Activated CD4-positive, alpha-beta memory T cell treated with anti-CD3 and anti-CD28 coated beads for 36 hours (primary cell): ENCODE measurements at regions of chr5 and their contacts with region 1.

Region 1: DNA sequence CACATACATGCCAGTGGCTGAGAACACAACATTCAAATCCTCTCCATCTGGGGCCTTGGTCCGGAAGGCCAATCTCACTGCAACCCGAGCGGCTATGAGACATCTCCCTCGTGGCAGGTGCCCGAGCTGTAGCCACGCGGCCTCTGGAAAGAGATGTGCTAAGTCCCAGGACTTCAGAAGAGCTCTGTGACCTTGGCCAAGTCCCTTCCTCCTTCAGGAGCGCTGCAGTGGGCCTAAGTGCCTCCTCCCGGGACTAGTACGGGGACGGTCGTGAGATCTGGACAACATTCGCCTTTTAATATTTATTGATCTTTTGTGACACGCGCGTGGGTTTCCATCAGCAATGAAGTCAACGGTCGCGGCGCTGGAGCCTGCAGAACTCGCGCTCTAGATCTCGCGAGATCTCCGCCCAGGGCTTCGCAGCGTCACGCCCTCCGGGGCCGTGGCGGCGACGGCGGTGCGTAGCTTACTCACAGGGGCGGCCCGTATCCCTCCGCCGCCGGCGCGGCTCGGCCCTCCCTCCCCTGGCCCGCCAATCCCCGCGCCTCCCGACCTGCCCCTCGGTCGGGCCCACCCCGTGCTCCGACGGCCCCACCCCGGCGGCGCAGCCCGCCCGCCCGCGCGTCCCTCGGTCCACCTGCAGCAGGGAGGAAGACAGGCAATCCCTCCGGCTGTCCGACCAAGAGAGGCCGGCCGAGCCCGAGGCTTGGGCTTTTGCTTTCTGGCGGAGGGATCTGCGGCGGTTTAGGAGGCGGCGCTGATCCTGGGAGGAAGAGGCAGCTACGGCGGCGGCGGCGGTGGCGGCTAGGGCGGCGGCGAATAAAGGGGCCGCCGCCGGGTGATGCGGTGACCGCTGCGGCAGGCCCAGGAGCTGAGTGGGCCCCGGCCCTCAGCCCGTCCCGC is at the start of gene UBE2D2:
- DNase-seq: peak; percentile 98
- H3K4me3 Mint-ChIP-seq: peak within 1 kb of the TSS; percentile 90
- H3K27ac Mint-ChIP-seq: peak within 1 kb of the TSS; percentile 92
- H3K4me1 Mint-ChIP-seq: peaks cover 25% of the 10 kb centered on the region
- H3K27me3 Mint-ChIP-seq: no peaks in the 10 kb centered on the region
- total RNA-seq, gene UBE2D2: 271 to 285 TPM

Region 2: GRCh38 chr5:139293504-139294373 is 267.3 kb before region 1 on chr5 and contains the start of gene MATR3:
- CTCF ChIA-PET with region 1: no interaction called
- POLR2A ChIA-PET with region 1: interaction called, 9 read pairs
- intact Hi-C with region 1: loop called (anchors 5 kb)
- DNase-seq: peak; percentile 96
- H3K4me3 Mint-ChIP-seq: peak within 1 kb of the TSS; percentile 95
- H3K27ac Mint-ChIP-seq: peak within 1 kb of the TSS; percentile 98
- H3K4me1 Mint-ChIP-seq: peaks cover 31% of the 10 kb centered on the region
- H3K27me3 Mint-ChIP-seq: no peaks in the 10 kb centered on the region
- total RNA-seq, gene MATR3: 163 to 179 TPM

Region 3: GRCh38 chr5:139417214-139417613 is 143.8 kb before region 1 on chr5:
- CTCF ChIA-PET with region 1: interaction called, 8 read pairs
- POLR2A ChIA-PET with region 1: interaction called, 4 read pairs
- intact Hi-C with region 1: loop called (anchors 2 kb)
- DNase-seq: no peak
- H3K4me3 Mint-ChIP-seq: no peak overlapping the region
- H3K27ac Mint-ChIP-seq: peak overlapping the region; percentile 96
- H3K4me1 Mint-ChIP-seq: peaks cover 56% of the 10 kb centered on the region
- H3K27me3 Mint-ChIP-seq: no peaks in the 10 kb centered on the region

Region 4: DNA sequence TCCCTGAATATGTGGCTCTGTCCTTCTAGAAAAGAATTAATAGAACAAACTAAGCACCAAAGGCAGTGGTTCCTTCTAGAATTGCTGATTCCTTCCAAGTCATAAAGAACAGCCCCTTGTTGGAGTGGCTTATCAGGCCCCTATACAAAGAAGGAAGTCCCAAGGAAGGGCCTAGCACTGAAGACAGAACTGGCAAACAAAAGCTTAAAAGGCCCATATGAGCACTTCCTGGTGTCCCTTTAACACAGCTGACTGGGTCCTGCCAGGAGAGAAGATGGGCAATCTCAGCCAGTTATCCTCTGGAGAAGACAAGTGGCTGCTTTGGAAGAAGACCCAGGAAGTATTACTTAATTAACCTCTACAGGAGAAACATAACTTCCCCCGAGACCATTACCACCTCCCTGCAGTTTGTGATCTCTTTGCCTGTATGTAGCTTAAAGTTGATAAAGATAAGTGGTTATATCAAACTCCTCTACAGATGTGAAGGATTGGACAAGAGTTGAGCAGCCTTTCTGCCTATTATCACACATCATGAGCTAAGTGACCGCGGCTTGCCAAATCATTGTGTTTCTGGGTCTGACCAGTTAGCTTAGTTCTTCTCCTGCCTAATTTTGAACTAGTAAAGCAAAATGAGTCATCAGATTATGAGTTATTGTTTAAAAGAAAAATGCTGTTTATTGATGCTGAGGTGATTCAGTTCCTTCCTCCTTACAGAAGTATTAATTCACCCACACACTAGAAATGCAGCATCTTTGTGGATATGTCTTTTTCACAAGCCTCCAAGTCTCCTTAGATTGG is 65.2 kb before region 1 on chr5:
- CTCF ChIA-PET with region 1: no interaction called
- POLR2A ChIA-PET with region 1: no interaction called
- intact Hi-C with region 1: no loop called
- DNase-seq: peak; percentile 51
- H3K4me3 Mint-ChIP-seq: no peak overlapping the region
- H3K27ac Mint-ChIP-seq: peak overlapping the region; percentile 73
- H3K4me1 Mint-ChIP-seq: peaks cover 26% of the 10 kb centered on the region
- H3K27me3 Mint-ChIP-seq: no peaks in the 10 kb centered on the region

Region 5: DNA sequence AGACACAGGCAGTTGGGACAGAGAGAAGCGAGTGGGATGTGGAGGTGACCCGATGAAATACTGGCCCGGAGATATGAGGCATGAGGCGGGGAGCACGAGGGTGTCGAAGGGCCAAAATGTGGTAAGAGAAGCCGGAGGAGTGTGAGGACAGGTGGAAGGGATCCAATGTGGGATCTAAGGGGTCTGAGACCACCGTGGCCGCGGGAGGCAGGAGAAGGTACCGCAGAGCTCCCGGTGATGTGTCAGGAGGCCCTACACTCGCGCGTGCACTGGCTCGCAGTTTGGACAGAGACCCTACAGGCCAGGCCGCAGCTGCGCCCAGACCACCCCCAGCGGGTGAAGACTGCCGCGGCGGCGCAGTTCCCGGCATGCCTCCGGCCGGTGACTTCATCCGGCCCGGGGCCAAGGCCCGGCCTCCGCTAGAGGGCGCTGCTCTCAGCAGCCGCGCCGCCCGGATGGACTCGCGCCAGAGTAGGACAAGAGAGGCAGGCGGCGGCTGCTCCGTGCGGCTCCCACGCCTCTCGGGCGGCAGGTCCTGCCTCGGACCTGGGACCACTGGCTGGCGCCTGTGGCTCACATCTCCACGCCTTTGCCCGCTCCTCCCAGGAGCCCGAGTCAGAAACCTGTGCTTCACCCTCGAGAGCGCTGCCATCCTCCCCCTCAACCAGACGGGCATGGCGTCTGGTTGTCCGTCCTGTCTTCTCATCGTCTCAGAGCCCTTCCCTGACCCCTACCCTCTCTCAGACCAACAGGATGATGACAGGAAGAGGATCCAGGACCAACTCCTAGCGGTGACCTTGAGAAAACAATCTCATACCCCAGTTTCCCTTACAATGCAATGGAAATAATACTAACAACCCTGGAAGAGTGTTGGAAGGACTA is 43.1 kb before region 1 on chr5:
- CTCF ChIA-PET with region 1: interaction called, 8 read pairs
- POLR2A ChIA-PET with region 1: interaction called, 6 read pairs
- intact Hi-C with region 1: loop called (anchors 2 kb)
- DNase-seq: peak; percentile 93
- H3K4me3 Mint-ChIP-seq: peak overlapping the region; percentile 82
- H3K27ac Mint-ChIP-seq: peak overlapping the region; percentile 81
- H3K4me1 Mint-ChIP-seq: peaks cover 32% of the 10 kb centered on the region
- H3K27me3 Mint-ChIP-seq: no peaks in the 10 kb centered on the region

Region 6: GRCh38 chr5:139593716-139594319 is 32.8 kb after region 1 on chr5:
- CTCF ChIA-PET with region 1: interaction called, 4 read pairs
- POLR2A ChIA-PET with region 1: interaction called, 3 read pairs
- intact Hi-C with region 1: loop called (anchors 5 kb)
- DNase-seq: peak; percentile 42
- H3K4me3 Mint-ChIP-seq: no peak overlapping the region
- H3K27ac Mint-ChIP-seq: peak overlapping the region; percentile 33
- H3K4me1 Mint-ChIP-seq: peaks cover 55% of the 10 kb centered on the region
- H3K27me3 Mint-ChIP-seq: no peaks in the 10 kb centered on the region

Region 7: DNA sequence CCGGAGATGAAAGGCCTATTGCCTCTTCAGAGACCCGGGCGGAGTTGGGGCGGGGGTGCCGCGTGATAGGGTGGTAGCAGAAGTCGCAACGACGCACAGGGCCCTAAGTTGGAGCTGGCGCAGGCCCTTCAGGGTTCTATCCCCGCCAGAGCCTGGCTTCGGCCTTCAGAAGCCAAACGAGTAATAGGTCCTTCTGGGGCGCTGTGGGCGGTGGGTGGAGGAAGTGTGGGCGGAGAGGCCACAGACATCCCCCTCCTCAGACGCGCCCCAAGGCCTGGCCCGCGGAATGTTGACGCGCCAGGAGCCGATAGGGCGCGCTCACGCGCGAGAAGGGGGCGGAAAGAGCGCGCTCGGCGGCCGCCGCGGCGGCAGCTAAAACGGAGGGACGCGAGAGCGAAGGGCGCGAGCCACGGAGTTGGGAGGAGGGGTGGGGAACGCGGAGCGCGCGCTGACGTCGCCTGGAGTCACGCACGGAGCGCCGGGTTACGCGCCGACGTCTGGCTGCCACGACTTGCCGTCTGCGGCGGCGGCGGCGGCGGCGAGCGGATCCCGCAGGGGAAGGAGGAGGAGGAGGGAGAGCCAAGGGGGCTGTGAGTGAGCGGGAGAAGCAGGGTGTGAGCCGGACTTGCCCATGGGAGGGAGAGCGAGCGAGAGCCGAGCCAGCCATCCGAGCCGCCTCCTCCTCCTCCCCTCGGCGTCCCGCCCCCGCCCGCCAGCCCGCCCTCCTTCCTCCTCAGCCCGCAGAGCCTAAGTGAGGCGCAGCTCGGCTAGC is 546.5 kb after region 1 on chr5:
- CTCF ChIA-PET with region 1: no interaction called
- POLR2A ChIA-PET with region 1: no interaction called
- intact Hi-C with region 1: loop called (anchors 5 kb)
- DNase-seq: peak; percentile 95
- H3K4me3 Mint-ChIP-seq: peak overlapping the region; percentile 98
- H3K27ac Mint-ChIP-seq: peak overlapping the region; percentile 94
- H3K4me1 Mint-ChIP-seq: peaks cover 43% of the 10 kb centered on the region
- H3K27me3 Mint-ChIP-seq: no peaks in the 10 kb centered on the region